ENCODE measurements at regions of chr17 and their contacts with region 1.

Region 1: GRCh38 chr17:38735161-38735997 is 5.2 kb downstream of the CISD3 start:
- DNase-seq: peak; percentile 57 to 66 (median 61)
- H3K4me3 ChIP-seq: no peak overlapping the region
- H3K4me3 Mint-ChIP-seq: no peak overlapping the region
- H3K27ac ChIP-seq: no peak overlapping the region
- H3K27ac Mint-ChIP-seq: peak overlapping the region in 2 of 7 donors; percentile 41 to 64
- H3K4me1 ChIP-seq: peaks cover 40% of the 10 kb centered on the region
- H3K4me1 Mint-ChIP-seq: peaks cover 19 to 51% (median 41%) of the 10 kb centered on the region in 4 donors
- H3K27me3 ChIP-seq: no peaks in the 10 kb centered on the region
- H3K27me3 Mint-ChIP-seq: peaks cover 0 to 2% of the 10 kb centered on the region in 2 donors

Region 2: GRCh38 chr17:38674749-38675615 is 60.4 kb before region 1 on chr17 and contains the start of gene EPOP:
- CTCF ChIA-PET with region 1: interaction called, 198 read pairs
- POLR2A ChIA-PET with region 1: interaction called, 38 read pairs
- intact Hi-C with region 1: loop called (anchors 1 kb)
- DNase-seq: peak; percentile 68 to 82 (median 74)
- H3K4me3 ChIP-seq: peak within 1 kb of the TSS in 1 of 2 donors; percentile 52
- H3K4me3 Mint-ChIP-seq: peak within 1 kb of the TSS; percentile 39 to 82 (median 73)
- H3K27ac ChIP-seq: peak within 1 kb of the TSS; percentile 9
- H3K27ac Mint-ChIP-seq: peak within 1 kb of the TSS in 4 of 7 donors; percentile 31 to 47 (median 40)
- H3K4me1 ChIP-seq: peaks cover 11% of the 10 kb centered on the region
- H3K4me1 Mint-ChIP-seq: peaks cover 5 to 25% (median 11%) of the 10 kb centered on the region in 4 donors
- H3K27me3 ChIP-seq: peaks cover 12% of the 10 kb centered on the region
- H3K27me3 Mint-ChIP-seq: peaks cover 17 to 30% of the 10 kb centered on the region in 2 donors
- total RNA-seq, gene EPOP: 0.09 to 0.25 TPM

Region 3: GRCh38 chr17:38702166-38702899 is 33.0 kb before region 1 on chr17:
- CTCF ChIA-PET with region 1: interaction called, 29 read pairs
- POLR2A ChIA-PET with region 1: interaction called, 588 read pairs
- intact Hi-C with region 1: loop called (anchors 1 kb)
- DNase-seq: peak; percentile 75 to 83 (median 80)
- H3K4me3 ChIP-seq: peak overlapping the region; percentile 74 to 97
- H3K4me3 Mint-ChIP-seq: peak overlapping the region; percentile 92 to 99 (median 96)
- H3K27ac ChIP-seq: peak overlapping the region; percentile 94
- H3K27ac Mint-ChIP-seq: peak overlapping the region; percentile 92 to 98 (median 98)
- H3K4me1 ChIP-seq: peaks cover 40% of the 10 kb centered on the region
- H3K4me1 Mint-ChIP-seq: peaks cover 23 to 66% (median 34%) of the 10 kb centered on the region in 4 donors
- H3K27me3 ChIP-seq: no peaks in the 10 kb centered on the region
- H3K27me3 Mint-ChIP-seq: no peaks in the 10 kb centered on the region

Region 4: DNA sequence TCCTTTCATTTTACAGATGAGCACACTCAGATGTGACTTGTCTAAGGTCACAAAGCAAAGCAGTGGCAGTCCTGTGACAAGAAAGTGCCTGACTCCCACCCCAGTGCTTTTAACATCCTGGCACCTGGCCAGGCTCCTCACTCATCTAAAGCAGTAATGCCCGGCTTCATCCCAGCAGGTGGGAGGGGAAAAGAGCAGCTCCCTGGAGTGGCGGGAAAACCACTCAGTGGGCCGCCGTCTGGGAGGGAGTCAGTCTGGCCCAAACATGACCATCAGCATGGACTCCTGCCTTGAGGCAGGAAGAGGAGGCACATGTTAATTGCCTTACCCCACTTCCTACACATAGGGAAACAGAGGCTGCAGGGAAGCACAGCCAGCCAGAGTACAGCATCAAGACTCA is 10.2 kb after region 1 on chr17:
- CTCF ChIA-PET with region 1: interaction called, 17 read pairs
- POLR2A ChIA-PET with region 1: interaction called, 5 read pairs
- intact Hi-C with region 1: no loop called
- DNase-seq: no peak
- H3K4me3 ChIP-seq: no peak overlapping the region
- H3K4me3 Mint-ChIP-seq: peak overlapping the region in 1 of 8 donors; percentile 67
- H3K27ac ChIP-seq: no peak overlapping the region
- H3K27ac Mint-ChIP-seq: no peak overlapping the region
- H3K4me1 ChIP-seq: peaks cover 35% of the 10 kb centered on the region
- H3K4me1 Mint-ChIP-seq: peaks cover 6 to 22% (median 14%) of the 10 kb centered on the region in 4 donors
- H3K27me3 ChIP-seq: peaks cover 35% of the 10 kb centered on the region
- H3K27me3 Mint-ChIP-seq: peaks cover 19 to 22% of the 10 kb centered on the region in 2 donors

Region 5: DNA sequence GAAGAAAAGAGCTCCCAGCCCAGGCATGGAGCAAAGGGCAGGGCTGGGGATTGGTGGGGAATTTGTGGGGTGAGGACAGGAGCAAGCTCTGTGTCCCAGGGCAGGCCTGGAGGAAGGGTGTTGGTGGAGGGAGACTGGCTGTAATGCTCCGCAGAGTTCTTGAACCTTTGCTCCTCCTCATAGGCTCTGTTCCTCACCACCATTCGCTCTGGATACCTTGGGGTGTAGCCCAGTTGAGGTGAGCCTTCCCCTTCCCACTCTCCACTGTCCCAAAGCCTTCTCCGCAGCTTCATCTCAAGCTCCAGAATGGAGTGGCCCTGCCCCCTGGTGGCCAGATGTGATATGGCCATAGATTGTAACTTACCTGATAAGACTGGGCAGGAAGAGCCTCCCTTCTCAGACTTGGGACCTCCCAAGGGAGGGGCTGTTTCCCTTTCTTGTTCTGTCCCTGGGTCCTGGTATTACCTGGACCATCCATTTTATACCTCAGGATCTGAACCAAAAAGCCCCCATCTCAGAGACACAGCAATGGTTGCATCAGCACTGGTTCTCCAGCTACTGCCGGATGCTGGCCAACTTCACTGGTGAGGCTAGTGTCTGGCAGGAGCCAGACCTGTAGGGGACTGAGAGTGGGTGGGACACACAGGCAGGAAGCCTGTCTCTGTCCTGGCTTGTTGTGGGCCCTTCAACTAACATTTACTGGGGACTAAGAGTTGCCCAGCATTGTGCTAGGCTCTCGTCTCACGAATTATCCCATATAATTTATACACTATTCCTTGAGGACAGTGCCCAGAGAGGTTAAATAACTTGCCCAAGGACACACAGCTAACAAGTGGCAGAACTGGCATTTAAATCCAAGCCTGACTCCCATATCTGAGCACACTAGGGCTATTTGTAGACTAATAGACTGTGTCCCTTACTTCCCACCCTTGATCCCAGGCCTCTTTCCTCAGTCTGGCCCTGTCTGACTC is 509.5 kb after region 1 on chr17:
- CTCF ChIA-PET with region 1: no interaction called
- POLR2A ChIA-PET with region 1: no interaction called
- intact Hi-C with region 1: no loop called
- DNase-seq: peak; percentile 74 to 83 (median 78)
- H3K4me3 ChIP-seq: no peak overlapping the region
- H3K4me3 Mint-ChIP-seq: peak overlapping the region in 1 of 8 donors; percentile 57
- H3K27ac ChIP-seq: no peak overlapping the region
- H3K27ac Mint-ChIP-seq: peak overlapping the region in 5 of 7 donors; percentile 6 to 92 (median 44)
- H3K4me1 ChIP-seq: peaks cover 11% of the 10 kb centered on the region
- H3K4me1 Mint-ChIP-seq: peaks cover 5 to 14% (median 9%) of the 10 kb centered on the region in 4 donors
- H3K27me3 ChIP-seq: no peaks in the 10 kb centered on the region
- H3K27me3 Mint-ChIP-seq: peaks cover 2% of the 10 kb centered on the region in 2 donors